ENCODE measurements at regions of chr6 and their contacts with region 1.

Region 1: GRCh38 chr6:159008656-159009288 is 8.8 kb upstream of the RSPH3 start:
- H3K4me3 Mint-ChIP-seq: no peak overlapping the region
- H3K27ac Mint-ChIP-seq: no peak overlapping the region
- H3K4me1 Mint-ChIP-seq: peaks cover 61% of the 10 kb centered on the region
- H3K27me3 Mint-ChIP-seq: no peaks in the 10 kb centered on the region

Region 2: DNA sequence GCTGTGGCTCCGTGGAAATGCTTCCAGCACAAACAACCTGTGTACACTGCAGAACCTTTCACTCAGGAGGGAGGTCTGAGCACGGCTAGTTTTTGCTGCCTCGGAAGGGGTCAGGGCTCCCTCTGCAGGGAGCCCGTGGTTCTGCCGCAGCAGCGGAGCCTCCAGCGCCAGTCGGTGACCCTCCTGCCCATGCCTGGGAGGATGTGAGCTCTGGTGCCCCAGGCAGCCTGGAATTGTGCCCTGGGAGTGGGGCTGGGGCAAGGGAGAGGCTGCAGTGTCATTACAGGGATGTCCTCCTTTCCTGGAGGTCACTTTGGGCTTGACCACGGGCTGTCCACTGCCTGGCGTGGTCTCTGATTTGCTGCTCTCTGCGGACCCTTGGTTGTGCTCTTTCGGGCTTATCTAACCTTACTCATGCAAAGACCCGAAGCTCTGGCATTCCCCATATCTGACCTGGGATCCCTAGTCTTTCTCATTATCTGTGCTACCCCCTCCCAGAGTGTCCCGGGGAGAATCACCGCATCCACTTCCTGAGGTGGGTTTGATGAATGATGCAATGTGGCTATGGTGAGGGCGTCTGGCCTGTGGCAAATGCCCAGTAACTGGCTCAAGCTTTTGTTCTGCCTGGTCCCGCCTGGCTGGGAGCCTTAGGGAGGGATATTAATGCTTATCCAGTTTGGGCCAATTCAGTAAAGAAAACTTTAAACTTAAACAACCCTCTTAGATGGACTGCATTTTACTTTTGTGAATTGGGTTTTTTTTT is 95.6 kb after region 1 on chr6:
- intact Hi-C with region 1: loop called (anchors 2 kb)
- H3K4me3 Mint-ChIP-seq: no peak overlapping the region
- H3K27ac Mint-ChIP-seq: peak overlapping the region; percentile 11
- H3K4me1 Mint-ChIP-seq: peaks cover 46% of the 10 kb centered on the region
- H3K27me3 Mint-ChIP-seq: no peaks in the 10 kb centered on the region

Region 3: GRCh38 chr6:159134701-159135364 is 126.1 kb after region 1 on chr6:
- intact Hi-C with region 1: loop called (anchors 1 kb)
- H3K4me3 Mint-ChIP-seq: no peak overlapping the region
- H3K27ac Mint-ChIP-seq: no peak overlapping the region
- H3K4me1 Mint-ChIP-seq: peaks cover 15% of the 10 kb centered on the region
- H3K27me3 Mint-ChIP-seq: peaks cover 8% of the 10 kb centered on the region